GM12878 (cell line): ENCODE measurements at regions of chr17 and their contacts with region 1.

Region 1: GRCh38 chr17:4220655-4221054 is 43.1 kb downstream of the ANKFY1 start:
- DNase-seq: no peak
- ATAC-seq: no peak
- H3K4me3 ChIP-seq: no peak overlapping the region
- H3K27ac ChIP-seq: no peak overlapping the region
- H3K4me1 ChIP-seq: no peaks in the 10 kb centered on the region
- H3K27me3 ChIP-seq: no peaks in the 10 kb centered on the region
- CTCF ChIP-seq: no peak
- EP300 ChIP-seq: no peak
- POLR2A ChIP-seq: no peak
- RAD21 ChIP-seq: no peak

Region 2: DNA sequence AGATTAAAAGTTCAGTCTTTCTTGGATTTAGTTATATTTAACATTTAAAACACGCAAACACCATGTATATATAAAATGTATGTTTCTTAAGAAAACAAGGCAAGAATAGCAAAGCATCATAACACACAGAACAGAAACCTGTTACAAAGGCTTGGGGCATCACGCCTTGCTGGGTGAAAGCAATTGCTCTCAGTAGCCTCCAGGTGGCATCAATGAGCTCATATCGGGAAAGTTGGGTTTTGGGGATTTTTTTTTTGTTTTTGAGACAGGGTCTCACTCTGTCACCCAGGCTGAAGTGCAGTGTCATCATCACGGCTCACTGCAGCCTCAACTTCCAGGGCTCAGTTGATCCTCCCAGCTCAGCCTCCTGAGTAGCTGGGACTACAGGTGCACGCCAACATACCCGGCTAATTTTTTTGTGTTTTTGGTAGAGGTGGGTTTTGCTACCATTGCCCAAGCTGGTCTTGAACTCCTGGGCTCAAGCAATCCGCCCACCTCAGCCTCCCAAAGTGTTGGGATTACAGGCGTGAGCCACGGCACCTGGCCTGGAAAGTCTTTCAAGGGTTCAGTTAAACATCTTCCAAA is 20.7 kb before region 1 on chr17:
- CTCF ChIA-PET with region 1: interaction called, 39 read pairs
- POLR2A ChIA-PET with region 1: no interaction called
- RAD21 ChIA-PET with region 1: interaction called, 24 read pairs
- SMC1A ChIA-PET with region 1: interaction called, 19 read pairs
- in situ Hi-C with region 1: no loop called
- intact Hi-C with region 1: no loop called
- DNase-seq: no peak
- ATAC-seq: peak; percentile 81
- H3K4me3 ChIP-seq: no peak overlapping the region
- H3K27ac ChIP-seq: no peak overlapping the region
- H3K4me1 ChIP-seq: no peaks in the 10 kb centered on the region
- H3K27me3 ChIP-seq: no peaks in the 10 kb centered on the region
- CTCF ChIP-seq: peak; percentile 64 to 79 (median 72)
- EP300 ChIP-seq: no peak
- POLR2A ChIP-seq: no peak
- RAD21 ChIP-seq: peak; percentile 61

Region 3: DNA sequence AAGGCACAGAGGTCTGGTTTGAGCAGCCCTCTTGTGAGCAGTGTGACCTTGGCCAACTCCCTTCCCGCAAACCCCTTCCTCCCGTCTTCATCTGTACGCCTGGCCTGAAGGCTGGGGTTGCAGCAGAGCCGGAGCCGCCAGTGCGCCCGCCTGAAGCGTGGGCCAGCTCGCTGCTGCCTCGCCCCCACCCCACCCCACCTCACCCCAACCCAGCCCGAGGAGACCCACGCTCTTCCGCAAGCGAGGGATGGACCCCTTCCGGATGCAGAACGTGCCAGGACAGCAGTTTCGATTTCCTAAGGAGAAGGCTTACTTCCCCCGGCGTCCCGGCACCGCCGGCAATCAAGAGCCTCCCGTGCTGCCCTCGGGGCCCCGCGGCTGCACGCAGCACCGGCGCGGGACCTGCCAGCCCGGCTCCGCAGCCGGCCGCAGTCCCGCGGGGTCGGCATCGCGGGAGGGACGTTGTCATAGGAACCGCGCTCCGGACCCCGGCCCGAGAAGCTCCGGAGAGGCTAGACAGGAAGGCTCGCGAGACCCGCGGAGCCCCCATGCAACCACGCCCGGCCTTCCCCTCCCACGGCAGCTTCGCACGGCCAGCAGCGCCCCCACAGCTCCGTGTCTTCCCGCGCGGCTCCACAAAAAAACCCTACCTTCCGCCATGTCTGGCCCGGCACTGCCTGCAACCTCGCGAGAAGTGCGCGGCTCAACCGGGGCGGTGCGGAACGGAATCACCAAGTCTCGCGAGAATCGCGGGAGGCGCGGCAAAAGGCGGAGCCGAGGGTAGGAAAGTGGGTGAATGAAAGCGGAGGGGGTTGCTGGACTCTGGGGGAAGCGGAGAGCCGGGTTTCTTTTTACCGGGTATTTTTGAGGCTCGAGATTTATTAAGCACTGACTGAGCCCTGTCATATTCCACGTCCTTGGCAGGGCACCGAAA is 42.9 kb after region 1 on chr17 and contains the start of gene ANKFY1:
- CTCF ChIA-PET with region 1: interaction called, 12 read pairs
- POLR2A ChIA-PET with region 1: interaction called, 4 read pairs
- RAD21 ChIA-PET with region 1: interaction called, 6 read pairs
- SMC1A ChIA-PET with region 1: interaction called, 8 read pairs
- in situ Hi-C with region 1: no loop called
- intact Hi-C with region 1: no loop called
- DNase-seq: peak; percentile 87
- ATAC-seq: peak; percentile 98
- H3K4me3 ChIP-seq: peak within 1 kb of the TSS; percentile 94
- H3K27ac ChIP-seq: peak within 1 kb of the TSS; percentile 80
- H3K4me1 ChIP-seq: 0 out of 2 replicates have a peak, but pooled peaks cover 3% of the 10 kb centered on the region
- H3K27me3 ChIP-seq: no peaks in the 10 kb centered on the region
- CTCF ChIP-seq: peak; percentile 7 to 21 (median 16); a peak in 4 of 6 replicates
- EP300 ChIP-seq: no peak
- POLR2A ChIP-seq: peak; percentile 92
- RAD21 ChIP-seq: no peak
- polyA plus RNA-seq, gene ANKFY1: 3.0 to 5.0 TPM

Region 4: DNA sequence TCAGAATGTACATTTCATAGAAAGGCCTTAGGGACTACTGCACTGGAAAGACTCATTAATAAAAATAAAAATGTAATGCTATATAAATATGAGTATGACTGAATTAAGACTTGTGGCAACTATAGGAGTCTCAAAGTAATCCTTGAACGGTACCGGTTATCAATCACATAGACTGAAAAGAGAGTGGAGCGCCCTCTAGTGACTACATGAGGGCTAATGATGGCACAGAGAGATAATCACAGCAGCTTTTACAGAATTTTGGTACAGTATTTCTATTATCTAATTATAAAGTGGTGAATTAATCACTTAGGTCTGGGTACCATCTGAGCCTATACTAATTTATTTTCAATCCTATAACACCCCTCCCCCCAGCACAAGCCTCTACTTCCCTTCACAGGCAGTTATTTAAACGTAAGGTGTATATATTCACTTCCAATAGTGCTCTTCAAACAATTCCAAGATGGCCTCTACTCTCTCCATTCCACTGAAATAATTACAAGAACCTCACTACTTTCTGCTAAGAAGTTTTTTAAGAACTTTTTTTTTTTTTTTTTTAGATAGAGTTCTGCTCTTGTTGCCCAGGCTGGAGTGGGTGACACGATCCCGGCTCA is 83.9 kb after region 1 on chr17:
- CTCF ChIA-PET with region 1: interaction called, 5 read pairs
- POLR2A ChIA-PET with region 1: no interaction called
- RAD21 ChIA-PET with region 1: interaction called, 22 read pairs
- SMC1A ChIA-PET with region 1: interaction called, 22 read pairs
- in situ Hi-C with region 1: no loop called
- intact Hi-C with region 1: loop called (anchors 5 kb)
- DNase-seq: no peak
- ATAC-seq: peak; percentile 96
- H3K4me3 ChIP-seq: no peak overlapping the region
- H3K27ac ChIP-seq: no peak overlapping the region
- H3K4me1 ChIP-seq: peaks cover 3% of the 10 kb centered on the region; the same call in 1 of the 2 replicates
- H3K27me3 ChIP-seq: no peaks in the 10 kb centered on the region
- CTCF ChIP-seq: peak; percentile 60 to 72 (median 62)
- EP300 ChIP-seq: no peak
- POLR2A ChIP-seq: no peak
- RAD21 ChIP-seq: peak; percentile 51

Region 5: DNA sequence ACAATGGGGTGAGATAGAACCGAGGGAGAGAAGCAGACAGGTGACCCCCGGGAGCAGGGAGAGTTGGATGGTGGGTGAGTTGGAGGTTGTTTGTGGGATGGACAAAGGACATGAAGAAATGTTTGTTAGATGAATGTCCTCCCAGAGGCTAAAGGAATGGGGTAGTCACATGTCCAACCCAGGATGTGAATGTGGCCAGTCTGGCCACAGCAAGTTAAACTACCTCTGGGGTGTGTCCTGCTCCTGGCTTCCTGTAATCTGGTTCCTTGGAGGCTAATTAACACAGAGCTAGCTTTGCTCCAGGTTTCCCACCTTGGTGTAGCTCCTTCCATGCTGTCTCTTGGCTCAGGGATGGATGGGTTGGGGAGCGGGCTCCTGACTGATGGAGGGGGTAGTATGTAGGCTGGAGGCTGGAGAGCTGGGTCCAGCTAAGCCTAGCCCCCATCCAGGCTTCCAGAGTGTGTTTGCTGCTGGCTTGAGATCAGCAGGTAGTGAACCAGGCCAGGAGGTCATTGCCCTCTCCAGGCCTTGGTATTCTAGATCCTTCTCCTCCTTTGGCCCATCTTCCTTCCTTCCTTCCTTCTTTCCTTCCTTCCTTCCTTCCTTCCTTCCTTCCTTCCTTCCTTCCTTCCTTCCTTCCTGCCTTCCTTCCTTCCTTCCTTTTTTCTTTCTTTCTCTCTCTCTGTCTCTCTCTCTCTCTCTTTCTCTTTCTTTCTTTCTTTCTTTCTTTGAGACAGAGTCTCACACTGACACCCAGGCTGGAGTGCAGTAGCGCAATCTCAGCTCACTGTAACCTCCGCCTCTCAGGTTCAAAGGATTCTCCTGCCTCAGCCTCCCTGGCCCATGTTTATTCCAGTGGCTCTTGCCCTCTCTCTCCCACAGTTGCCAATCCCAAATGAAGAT is 173.8 kb after region 1 on chr17:
- CTCF ChIA-PET with region 1: interaction called, 25 read pairs
- POLR2A ChIA-PET with region 1: no interaction called
- RAD21 ChIA-PET with region 1: interaction called, 7 read pairs
- SMC1A ChIA-PET with region 1: interaction called, 15 read pairs
- in situ Hi-C with region 1: no loop called
- intact Hi-C with region 1: no loop called
- DNase-seq: no peak
- ATAC-seq: no peak
- H3K4me3 ChIP-seq: peak overlapping the region; percentile 49
- H3K27ac ChIP-seq: peak overlapping the region; percentile 98
- H3K4me1 ChIP-seq: peaks cover 48% of the 10 kb centered on the region
- H3K27me3 ChIP-seq: no peaks in the 10 kb centered on the region
- CTCF ChIP-seq: no peak
- EP300 ChIP-seq: no peak
- POLR2A ChIP-seq: no peak
- RAD21 ChIP-seq: no peak

Region 6: GRCh38 chr17:4412933-4413831 is 192.5 kb after region 1 on chr17:
- CTCF ChIA-PET with region 1: interaction called, 156 read pairs
- POLR2A ChIA-PET with region 1: interaction called, 5 read pairs
- RAD21 ChIA-PET with region 1: interaction called, 79 read pairs
- SMC1A ChIA-PET with region 1: interaction called, 45 read pairs
- in situ Hi-C with region 1: no loop called
- intact Hi-C with region 1: loop called (anchors 1 kb)
- DNase-seq: peak; percentile 48
- ATAC-seq: peak; percentile 100
- H3K4me3 ChIP-seq: 0 out of 2 replicates have a peak overlapping the region, but pooled peaks have one; percentile 59
- H3K27ac ChIP-seq: peak overlapping the region; percentile 0; the same call in 1 of the 2 replicates
- H3K4me1 ChIP-seq: peaks cover 4% of the 10 kb centered on the region
- H3K27me3 ChIP-seq: no peaks in the 10 kb centered on the region
- CTCF ChIP-seq: peak; percentile 89 to 98 (median 97); a peak in 5 of 6 replicates
- EP300 ChIP-seq: no peak
- POLR2A ChIP-seq: no peak
- RAD21 ChIP-seq: peak; percentile 100